HepG2 (cell line): ENCODE measurements at regions of chr5 and their contacts with region 1.

Region 1: DNA sequence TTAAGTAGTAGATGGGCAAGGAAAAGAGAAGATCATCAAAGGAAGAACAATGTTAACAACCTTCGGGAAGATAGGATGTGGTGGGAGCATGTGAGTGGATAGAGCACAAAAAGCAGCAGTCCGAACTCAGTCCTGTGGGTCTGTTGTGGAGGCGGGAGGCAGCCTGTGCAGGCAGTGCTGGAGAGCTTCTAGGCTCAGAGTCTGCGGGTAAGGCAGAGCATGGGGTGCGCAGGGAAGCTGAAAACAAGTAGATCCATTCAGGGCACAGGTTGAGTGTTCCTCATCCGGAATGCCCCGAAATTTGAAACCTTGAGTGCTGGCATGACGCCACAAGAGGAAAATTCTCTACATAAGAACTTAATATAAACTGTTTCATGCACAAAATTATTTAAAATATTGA is 84.9 kb downstream of the PPIC start:
- DNase-seq: no peak
- ATAC-seq: no peak
- H3K4me3 ChIP-seq: no peak overlapping the region
- H3K27ac ChIP-seq: no peak overlapping the region
- H3K4me1 ChIP-seq: no peaks in the 10 kb centered on the region
- H3K27me3 ChIP-seq: no peaks in the 10 kb centered on the region
- CTCF ChIP-seq: no peak
- EP300 ChIP-seq: no peak
- POLR2A ChIP-seq: no peak
- RAD21 ChIP-seq: no peak

Region 2: DNA sequence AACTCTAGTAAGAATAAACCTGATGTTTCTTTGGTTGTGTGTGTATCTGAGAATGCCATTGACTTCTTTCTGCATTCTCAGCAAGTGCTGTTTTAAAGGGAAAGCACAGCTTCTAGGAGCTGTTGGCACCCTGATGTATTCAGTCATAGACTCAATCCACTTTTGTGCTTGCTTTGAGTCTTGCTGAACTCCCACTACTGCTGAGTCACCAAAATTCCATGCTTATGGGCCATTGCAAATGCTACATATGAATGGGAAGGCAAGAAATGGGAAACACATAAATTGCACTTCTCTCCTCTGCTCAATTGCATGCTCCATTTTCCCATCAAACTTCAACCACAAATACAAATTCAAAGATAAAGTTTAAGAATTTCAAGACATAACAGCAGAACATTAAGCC is 1109.8 kb before region 1 on chr5:
- CTCF ChIA-PET with region 1: no interaction called
- POLR2A ChIA-PET with region 1: no interaction called
- in situ Hi-C with region 1: no loop called
- intact Hi-C with region 1: no loop called
- DNase-seq: no peak
- ATAC-seq: no peak
- H3K4me3 ChIP-seq: no peak overlapping the region
- H3K27ac ChIP-seq: no peak overlapping the region
- H3K4me1 ChIP-seq: no peaks in the 10 kb centered on the region
- H3K27me3 ChIP-seq: no peaks in the 10 kb centered on the region
- CTCF ChIP-seq: no peak
- EP300 ChIP-seq: no peak
- POLR2A ChIP-seq: no peak
- RAD21 ChIP-seq: no peak

Region 3: DNA sequence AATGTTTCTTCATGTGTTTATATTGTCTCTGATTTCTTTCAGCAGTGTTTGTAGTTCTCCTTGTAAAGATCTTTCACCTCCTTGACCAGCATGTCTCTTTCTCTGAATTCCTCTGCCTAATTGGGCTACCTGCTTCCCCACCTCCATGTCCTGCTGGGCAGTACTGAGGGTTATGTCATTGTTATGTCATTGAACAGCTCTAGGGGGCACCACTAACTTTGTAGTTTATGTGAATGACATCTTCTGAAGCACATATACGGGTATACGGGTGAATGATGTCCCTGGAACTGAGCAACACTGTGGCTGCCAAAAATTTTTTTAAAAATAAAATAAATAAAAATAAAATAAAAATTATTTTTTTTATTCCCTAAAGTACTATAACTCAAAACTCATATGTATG is 656.5 kb before region 1 on chr5:
- CTCF ChIA-PET with region 1: no interaction called
- POLR2A ChIA-PET with region 1: no interaction called
- in situ Hi-C with region 1: no loop called
- intact Hi-C with region 1: no loop called
- DNase-seq: peak; percentile 11
- ATAC-seq: peak; percentile 76
- H3K4me3 ChIP-seq: no peak overlapping the region
- H3K27ac ChIP-seq: no peak overlapping the region
- H3K4me1 ChIP-seq: no peaks in the 10 kb centered on the region
- H3K27me3 ChIP-seq: no peaks in the 10 kb centered on the region
- CTCF ChIP-seq: peak; percentile 39; the same call in 1 of the 2 replicates
- EP300 ChIP-seq: no peak
- POLR2A ChIP-seq: no peak
- RAD21 ChIP-seq: no peak

Region 4: DNA sequence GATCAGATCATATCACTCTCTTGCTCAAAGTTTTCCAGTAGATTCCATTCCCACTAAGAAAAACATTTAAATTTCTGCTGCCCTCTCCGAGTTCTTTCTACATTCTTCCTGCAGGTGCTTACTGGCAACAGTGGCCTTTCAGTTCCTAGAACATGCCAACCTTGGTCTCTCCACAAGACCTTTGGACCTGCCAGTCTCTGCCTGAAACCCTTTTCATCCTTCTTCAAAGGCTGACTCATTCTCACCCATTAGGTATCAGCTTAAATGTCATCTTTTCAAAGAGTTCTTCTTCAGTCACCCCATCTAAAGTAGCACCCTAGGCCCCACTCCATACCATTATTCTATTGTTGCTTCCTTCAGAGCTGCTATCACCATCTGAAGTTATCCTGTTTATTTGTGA is 63.0 kb after region 1 on chr5:
- CTCF ChIA-PET with region 1: no interaction called
- POLR2A ChIA-PET with region 1: no interaction called
- in situ Hi-C with region 1: no loop called
- intact Hi-C with region 1: loop called (anchors 2 kb)
- DNase-seq: peak; percentile 59
- ATAC-seq: peak; percentile 66
- H3K4me3 ChIP-seq: no peak overlapping the region
- H3K27ac ChIP-seq: no peak overlapping the region
- H3K4me1 ChIP-seq: peaks cover 12% of the 10 kb centered on the region
- H3K27me3 ChIP-seq: no peaks in the 10 kb centered on the region; a peak in 1 of 5 replicates
- CTCF ChIP-seq: no peak
- EP300 ChIP-seq: peak in 1 of 2 experiments; percentile 27; a peak in 1 of 4 replicates
- POLR2A ChIP-seq: no peak
- RAD21 ChIP-seq: no peak